Esophagus muscularis mucosa (tissue), 4 donors: ENCODE measurements at regions of chr7 and their contacts with region 1.

Region 1: GRCh38 chr7:20598459-20599309 is 16.8 kb upstream of the ABCB5 start:
- DNase-seq: no peak
- H3K4me3 ChIP-seq: no peak overlapping the region
- H3K27ac ChIP-seq: no peak overlapping the region
- H3K4me1 ChIP-seq: peaks cover 0 to 4% (median 0%) of the 10 kb centered on the region in 4 donors
- H3K27me3 ChIP-seq: no peaks in the 10 kb centered on the region
- CTCF ChIP-seq: peak; percentile 74 to 85 (median 79)
- EP300 ChIP-seq: no peak
- POLR2A ChIP-seq: no peak

Region 2: GRCh38 chr7:19713676-19714075 is 885.0 kb before region 1 on chr7:
- intact Hi-C with region 1: loop called (anchors 10 kb)
- DNase-seq: no peak
- H3K4me3 ChIP-seq: no peak overlapping the region
- H3K27ac ChIP-seq: no peak overlapping the region
- H3K4me1 ChIP-seq: peaks cover 6 to 8% (median 7%) of the 10 kb centered on the region in 4 donors
- H3K27me3 ChIP-seq: no peaks in the 10 kb centered on the region
- CTCF ChIP-seq: peak; percentile 50 to 67 (median 57)
- EP300 ChIP-seq: no peak
- POLR2A ChIP-seq: no peak

Region 3: DNA sequence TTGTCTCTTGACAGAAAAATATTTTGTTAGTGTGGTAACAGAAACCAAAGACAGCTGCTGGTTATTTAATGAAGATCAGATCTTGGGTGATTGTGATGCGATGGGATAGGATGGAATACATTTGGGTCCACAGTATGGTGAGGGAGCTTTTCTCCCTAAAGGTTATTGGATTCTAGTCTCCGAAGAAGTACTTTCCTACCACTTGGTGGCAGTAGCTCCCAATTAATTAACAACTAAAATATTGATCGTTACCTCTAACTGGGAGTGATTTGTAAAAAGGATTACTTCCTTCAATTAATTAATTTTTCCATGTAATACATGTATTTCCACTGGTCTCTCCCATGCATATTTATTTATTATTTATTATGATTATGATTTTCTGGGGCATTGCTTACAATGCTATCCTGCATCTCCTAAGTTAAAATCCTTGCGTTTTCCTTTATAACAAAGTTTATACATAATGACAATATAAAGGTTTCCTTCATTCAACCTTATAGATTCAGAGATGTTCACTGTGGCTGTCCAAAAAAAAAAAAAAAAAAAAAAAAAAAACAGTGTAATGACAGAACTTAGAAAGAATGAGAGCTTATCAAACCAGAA is 850.8 kb before region 1 on chr7:
- intact Hi-C with region 1: loop called (anchors 2 kb)
- DNase-seq: no peak
- H3K4me3 ChIP-seq: no peak overlapping the region
- H3K27ac ChIP-seq: no peak overlapping the region
- H3K4me1 ChIP-seq: no peaks in the 10 kb centered on the region
- H3K27me3 ChIP-seq: no peaks in the 10 kb centered on the region
- CTCF ChIP-seq: peak; percentile 41 to 58 (median 52)
- EP300 ChIP-seq: no peak
- POLR2A ChIP-seq: no peak

Region 4: DNA sequence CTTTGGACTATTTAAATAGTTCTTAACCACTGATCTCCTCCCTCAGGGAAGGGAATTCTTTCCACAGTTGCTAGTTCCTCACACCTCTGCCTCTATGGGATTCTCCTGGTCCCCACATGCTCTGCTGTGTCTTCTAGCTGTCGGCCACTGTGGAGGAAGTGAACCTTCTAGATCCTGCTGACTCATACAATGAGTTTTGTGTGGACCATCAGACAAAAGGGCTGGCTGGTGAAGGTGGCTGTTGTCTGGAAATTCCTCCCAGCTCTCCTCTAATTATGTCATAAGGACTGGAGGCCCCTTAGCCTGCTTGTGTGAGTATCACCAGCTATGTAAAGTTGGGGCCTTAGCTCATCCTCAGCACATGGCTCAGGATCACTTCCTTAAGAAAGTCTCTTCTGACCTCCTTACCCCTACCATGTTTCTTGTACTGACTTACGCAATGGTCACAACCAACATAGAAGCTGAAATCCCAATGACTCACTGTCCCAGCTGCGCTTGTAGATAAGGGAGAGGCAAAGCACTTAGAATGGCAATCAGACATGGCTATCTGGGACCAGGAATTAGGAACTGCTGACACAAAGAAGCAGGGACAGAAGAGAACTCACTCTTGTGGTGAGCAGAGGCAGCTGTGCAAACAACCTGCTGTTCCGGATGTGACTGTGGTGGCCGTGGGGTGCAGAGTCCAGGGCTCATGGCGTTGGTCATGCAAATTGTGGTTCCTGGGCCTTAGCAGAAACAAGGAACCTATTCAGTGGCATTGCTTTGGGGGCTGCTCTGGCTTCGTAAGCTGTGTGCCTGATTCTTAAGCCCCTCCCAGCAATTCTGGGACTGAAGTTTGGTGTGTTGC is 379.0 kb before region 1 on chr7:
- intact Hi-C with region 1: no loop called
- DNase-seq: no peak
- H3K4me3 ChIP-seq: no peak overlapping the region
- H3K27ac ChIP-seq: peak overlapping the region; percentile 39 to 57 (median 53)
- H3K4me1 ChIP-seq: peaks cover 0 to 6% (median 0%) of the 10 kb centered on the region in 4 donors
- H3K27me3 ChIP-seq: no peaks in the 10 kb centered on the region
- CTCF ChIP-seq: no peak
- EP300 ChIP-seq: no peak
- POLR2A ChIP-seq: no peak